T-cell (primary cell): ENCODE measurements at regions of chr2 and their contacts with region 1.

Region 1: DNA sequence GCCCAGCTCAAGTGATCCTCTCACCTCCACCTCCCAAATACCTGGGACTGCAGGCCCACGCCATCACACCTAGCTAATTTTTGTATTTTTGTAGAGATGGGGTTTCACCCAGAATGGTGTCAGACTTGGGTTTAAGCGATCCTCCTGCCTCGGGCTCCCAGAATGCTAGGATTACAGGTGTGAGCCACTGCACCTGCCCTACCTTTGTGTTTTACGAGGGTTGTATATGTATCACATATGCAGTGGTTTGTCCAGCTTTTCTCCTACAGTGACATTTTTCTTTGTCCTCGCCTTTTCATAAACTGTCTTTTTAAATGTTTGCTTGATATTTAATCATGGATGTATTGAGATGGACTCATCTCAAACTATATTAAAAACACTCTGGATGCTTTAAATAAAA is 38.5 kb downstream of the AGAP1 start:
- DNase-seq: no peak
- ATAC-seq: no peak
- H3K4me3 ChIP-seq: no peak overlapping the region
- H3K4me3 Mint-ChIP-seq: no peak overlapping the region
- H3K27ac ChIP-seq: no peak overlapping the region
- H3K27ac Mint-ChIP-seq: no peak overlapping the region
- H3K4me1 ChIP-seq: no peaks in the 10 kb centered on the region
- H3K4me1 Mint-ChIP-seq: peaks cover 0 to 4% (median 0%) of the 10 kb centered on the region in 3 donors
- H3K27me3 ChIP-seq: peaks cover 0 to 17% of the 10 kb centered on the region in 2 experiments
- H3K27me3 Mint-ChIP-seq: peaks cover 5 to 10% of the 10 kb centered on the region in 2 donors

Region 2: GRCh38 chr2:235851828-235852525 is 319.7 kb after region 1 on chr2:
- CTCF ChIA-PET with region 1: no interaction called
- POLR2A ChIA-PET with region 1: interaction called in 1 of 2 experiments, 12 read pairs
- DNase-seq: no peak
- ATAC-seq: no peak
- H3K4me3 ChIP-seq: no peak overlapping the region
- H3K4me3 Mint-ChIP-seq: no peak overlapping the region
- H3K27ac ChIP-seq: no peak overlapping the region
- H3K27ac Mint-ChIP-seq: no peak overlapping the region
- H3K4me1 ChIP-seq: no peaks in the 10 kb centered on the region
- H3K4me1 Mint-ChIP-seq: no peaks in the 10 kb centered on the region
- H3K27me3 ChIP-seq: peaks cover 0 to 9% of the 10 kb centered on the region in 2 experiments
- H3K27me3 Mint-ChIP-seq: peaks cover 3 to 6% of the 10 kb centered on the region in 2 donors